ENCODE measurements at regions of chr17 and their contacts with region 1.

Region 1: GRCh38 chr17:50421308-50422051 is 4.5 kb upstream of the ACSF2 start:
- DNase-seq: no peak
- ATAC-seq: no peak
- H3K4me3 ChIP-seq: peak overlapping the region; percentile 24
- H3K27ac ChIP-seq: peak overlapping the region; percentile 12; the same call in 1 of the 2 replicates
- H3K4me1 ChIP-seq: peaks cover 22% of the 10 kb centered on the region
- H3K27me3 ChIP-seq: no peaks in the 10 kb centered on the region
- CTCF ChIP-seq: no peak
- POLR2A ChIP-seq: no peak
- RAD21 ChIP-seq: no peak

Region 2: DNA sequence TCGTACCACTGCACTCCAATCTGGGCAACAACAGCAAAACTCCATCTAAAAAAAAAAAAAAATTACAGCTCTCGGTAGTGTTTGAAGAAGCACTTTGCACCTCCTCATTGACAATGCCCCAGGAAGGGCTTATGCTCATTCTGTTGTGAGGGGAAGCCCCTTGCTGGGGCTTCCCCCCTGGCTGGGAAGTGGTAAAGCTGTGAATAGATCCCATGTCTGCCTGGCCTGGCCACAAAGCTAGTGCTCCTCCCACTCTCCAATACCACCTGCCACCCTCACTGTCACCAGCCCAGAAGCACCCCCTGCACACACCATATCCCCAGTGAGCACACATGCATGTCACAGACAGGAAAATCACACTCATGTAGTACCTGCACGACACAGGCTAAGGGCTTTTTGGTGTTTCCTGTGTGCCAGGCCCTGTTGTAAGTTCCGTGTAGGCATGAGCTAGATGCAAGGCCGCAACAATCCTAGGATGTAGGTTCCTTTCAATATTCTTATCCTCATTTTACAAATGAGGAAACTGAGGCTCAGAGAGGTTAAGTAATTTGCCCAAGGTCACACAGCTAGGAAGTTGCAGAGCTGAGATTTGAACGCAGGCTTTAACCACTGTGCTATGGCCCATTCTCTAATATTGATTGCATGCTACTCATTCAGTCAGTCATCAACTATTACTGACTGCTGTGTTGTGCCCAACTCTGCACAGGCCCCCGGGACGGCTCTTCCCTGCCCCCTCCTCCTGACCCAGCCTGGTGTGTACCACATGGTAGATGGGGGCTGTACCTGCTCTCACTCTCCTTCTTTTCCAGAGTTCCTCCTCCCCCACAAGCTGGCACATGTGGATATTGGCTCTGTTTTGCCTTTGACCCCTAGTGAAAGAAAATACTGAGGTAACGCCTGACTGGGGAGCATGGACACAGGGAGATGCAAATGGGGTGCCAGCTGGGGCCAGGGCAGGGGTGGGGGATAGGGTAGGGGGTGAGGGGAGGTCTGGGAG is 208.2 kb before region 1 on chr17:
- CTCF ChIA-PET with region 1: no interaction called
- POLR2A ChIA-PET with region 1: no interaction called
- dilution Hi-C with region 1: no loop called
- in situ Hi-C with region 1: no loop called
- intact Hi-C with region 1: no loop called
- DNase-seq: peak; percentile 51
- ATAC-seq: no peak
- H3K4me3 ChIP-seq: no peak overlapping the region
- H3K27ac ChIP-seq: peak overlapping the region; percentile 17; the same call in 1 of the 2 replicates
- H3K4me1 ChIP-seq: peaks cover 55% of the 10 kb centered on the region
- H3K27me3 ChIP-seq: no peaks in the 10 kb centered on the region
- CTCF ChIP-seq: peak; percentile 27; the same call in 1 of the 2 replicates
- POLR2A ChIP-seq: no peak
- RAD21 ChIP-seq: peak; percentile 41; the same call in 1 of the 2 replicates

Region 3: GRCh38 chr17:50626037-50626574 is 204.6 kb after region 1 on chr17:
- CTCF ChIA-PET with region 1: no interaction called
- POLR2A ChIA-PET with region 1: interaction called, 10 read pairs
- dilution Hi-C with region 1: no loop called
- in situ Hi-C with region 1: no loop called
- intact Hi-C with region 1: no loop called
- DNase-seq: peak; percentile 62
- ATAC-seq: peak; percentile 84
- H3K4me3 ChIP-seq: no peak overlapping the region
- H3K27ac ChIP-seq: no peak overlapping the region
- H3K4me1 ChIP-seq: peaks cover 5% of the 10 kb centered on the region
- H3K27me3 ChIP-seq: peaks cover 7% of the 10 kb centered on the region; the same call in 1 of the 2 replicates
- CTCF ChIP-seq: peak; percentile 70
- POLR2A ChIP-seq: no peak
- RAD21 ChIP-seq: peak; percentile 79

Measured in IMR-90 (cell line).